ENCODE measurements at regions of chr12 and their contacts with region 1.

Region 1: DNA sequence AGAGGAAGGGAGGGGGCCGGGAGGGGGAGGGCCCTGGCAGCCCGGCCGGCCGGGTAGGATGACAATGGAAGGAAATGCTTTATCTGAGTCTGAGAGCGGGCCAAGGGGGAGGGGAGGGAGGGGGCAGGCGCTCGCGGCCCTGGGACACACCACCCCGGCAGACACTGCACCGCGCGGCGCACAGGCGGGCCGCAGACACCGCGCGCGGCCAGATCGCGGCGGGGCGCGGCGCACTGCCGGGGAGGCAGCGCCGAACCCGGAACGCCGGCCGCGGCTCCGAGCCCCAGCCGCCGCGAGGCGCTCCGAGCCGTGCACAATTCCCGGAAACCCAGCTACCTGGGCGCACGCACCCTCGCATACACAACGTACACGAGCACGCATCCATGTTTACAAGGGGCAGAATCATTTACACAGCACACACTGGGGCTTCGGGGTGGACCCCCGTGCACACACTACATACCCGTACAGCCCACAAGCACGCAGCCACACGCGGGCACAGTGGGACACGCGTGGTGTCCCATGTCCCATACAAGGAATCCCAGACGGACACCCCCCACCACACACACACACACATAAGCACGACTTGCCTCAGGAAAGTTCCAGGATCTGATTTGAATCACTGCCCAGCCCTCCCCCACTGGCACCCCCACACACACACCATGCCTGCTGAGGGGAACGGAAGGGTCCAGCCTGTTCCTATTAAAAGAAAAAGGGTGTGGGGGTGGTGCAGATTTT is at the start of gene HDAC7:
- DNase-seq: no peak
- H3K4me3 ChIP-seq: peak within 1 kb of the TSS; percentile 65 to 79 (median 66)
- H3K27ac ChIP-seq: peak within 1 kb of the TSS; percentile 93
- H3K4me1 ChIP-seq: peaks cover 5 to 41% (median 35%) of the 10 kb centered on the region in 4 experiments
- H3K27me3 ChIP-seq: no peaks in the 10 kb centered on the region; a peak in 2 of 7 replicates
- CTCF ChIP-seq: no peak
- EP300 ChIP-seq: no peak
- POLR2A ChIP-seq: peak in 1 of 2 experiments; percentile 68; a peak in 2 of 3 replicates
- RAD21 ChIP-seq: no peak
- total RNA-seq, gene HDAC7: 82.0 and 84.9 TPM in 2 replicates

Region 2: DNA sequence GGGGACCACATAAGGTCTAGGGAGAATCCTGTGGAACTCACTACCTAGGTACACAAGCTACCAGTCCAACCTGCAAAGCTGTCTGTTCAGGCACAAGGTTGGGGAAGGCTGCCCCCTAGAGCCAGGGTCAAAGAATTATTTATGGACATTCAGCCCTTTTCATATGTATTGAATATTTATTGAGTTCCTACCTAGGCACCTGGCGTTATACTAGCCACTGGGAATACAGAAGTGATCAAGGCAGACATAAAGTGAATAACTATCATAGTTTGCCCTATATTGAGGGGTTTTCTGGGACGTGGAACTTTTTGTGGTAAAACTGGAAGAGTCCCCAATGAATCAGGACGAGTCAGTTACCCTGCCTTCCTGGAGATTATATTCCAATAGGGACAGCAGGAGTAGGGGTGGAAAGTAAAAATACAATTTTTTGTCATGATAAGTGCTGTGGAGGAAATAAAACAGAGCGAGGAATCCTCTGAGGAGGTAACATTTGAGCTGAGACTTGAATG is 52.8 kb before region 1 on chr12:
- CTCF ChIA-PET with region 1: interaction called, 2,001 read pairs
- POLR2A ChIA-PET with region 1: interaction called, 3 read pairs
- DNase-seq: peak in 1 of 2 experiments; percentile 77
- H3K4me3 ChIP-seq: no peak overlapping the region
- H3K27ac ChIP-seq: no peak overlapping the region
- H3K4me1 ChIP-seq: peaks cover 3 to 12% (median 9%) of the 10 kb centered on the region in 4 experiments; a peak in 5 of 7 replicates
- H3K27me3 ChIP-seq: no peaks in the 10 kb centered on the region; a peak in 1 of 7 replicates
- CTCF ChIP-seq: peak; percentile 63 to 89 (median 77)
- EP300 ChIP-seq: no peak
- POLR2A ChIP-seq: no peak
- RAD21 ChIP-seq: peak; percentile 83 to 87

Measured in H1 (cell line).